PC-3 (cell line): ENCODE measurements at regions of chr6 and their contacts with region 1.

Region 1: DNA sequence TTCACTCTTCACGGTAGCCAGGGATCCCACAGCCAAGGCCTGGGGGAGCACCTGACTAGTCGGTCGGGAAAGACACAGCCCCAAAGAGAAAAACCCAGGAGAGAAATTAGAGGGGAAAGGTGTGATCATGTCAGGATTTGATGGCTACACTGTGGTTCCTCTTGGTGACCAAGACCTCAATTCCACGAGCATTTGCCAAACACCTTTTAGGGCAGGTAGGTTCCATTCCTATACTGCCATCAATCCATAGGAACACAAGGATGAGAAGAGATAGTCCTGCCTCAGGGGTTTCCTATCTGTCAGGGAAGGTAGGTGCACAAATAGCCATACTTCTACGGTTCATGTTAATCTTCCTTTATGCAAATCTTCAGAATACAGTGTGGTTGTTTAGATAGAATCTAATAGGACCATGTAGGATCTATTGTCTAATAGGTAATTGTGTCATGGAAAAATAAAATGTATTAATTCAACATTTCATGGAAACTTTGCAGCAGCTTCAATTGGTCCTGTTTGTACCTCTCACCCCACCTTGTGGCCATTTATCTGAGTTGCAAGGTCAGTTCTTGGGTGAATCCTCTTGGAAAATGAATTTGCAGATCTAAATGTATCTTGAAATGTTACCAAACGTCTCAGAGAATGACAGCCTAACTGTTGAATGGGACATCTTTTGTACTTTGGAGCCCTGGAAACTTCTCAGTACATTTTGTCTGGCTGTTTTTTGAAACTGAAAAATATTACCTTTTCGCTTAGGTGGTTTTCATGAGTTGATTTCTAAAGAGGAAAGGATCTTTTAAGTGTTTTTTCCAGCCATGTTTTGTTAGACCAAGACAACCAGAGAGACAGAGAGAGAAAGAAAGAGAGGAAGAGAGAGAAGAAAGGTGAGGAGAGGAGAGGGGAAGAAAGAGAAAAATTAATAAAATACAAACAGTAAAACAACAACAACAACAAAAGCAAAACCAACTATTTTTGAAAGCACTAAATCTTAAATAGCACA is 33.7 kb upstream of the IYD start:
- DNase-seq: peak; percentile 67
- ATAC-seq: no peak
- H3K4me3 ChIP-seq: no peak overlapping the region
- H3K27ac ChIP-seq: no peak overlapping the region
- H3K4me1 ChIP-seq: peaks cover 8% of the 10 kb centered on the region
- H3K27me3 ChIP-seq: no peaks in the 10 kb centered on the region
- CTCF ChIP-seq: peak; percentile 86

Region 2: GRCh38 chr6:150004783-150005717 is 330.0 kb before region 1 on chr6:
- CTCF ChIA-PET with region 1: no interaction called
- POLR2A ChIA-PET with region 1: no interaction called
- intact Hi-C with region 1: loop called (anchors 2 kb)
- DNase-seq: peak; percentile 87
- ATAC-seq: peak; percentile 95
- H3K4me3 ChIP-seq: peak overlapping the region; percentile 86
- H3K27ac ChIP-seq: no peak overlapping the region
- H3K4me1 ChIP-seq: peaks cover 9% of the 10 kb centered on the region
- H3K27me3 ChIP-seq: no peaks in the 10 kb centered on the region
- CTCF ChIP-seq: no peak

Region 3: GRCh38 chr6:150079604-150080003 is 255.5 kb before region 1 on chr6:
- CTCF ChIA-PET with region 1: interaction called, 6 read pairs
- POLR2A ChIA-PET with region 1: no interaction called
- intact Hi-C with region 1: loop called (anchors 2 kb)
- DNase-seq: peak; percentile 10
- ATAC-seq: no peak
- H3K4me3 ChIP-seq: no peak overlapping the region
- H3K27ac ChIP-seq: no peak overlapping the region
- H3K4me1 ChIP-seq: peaks cover 18% of the 10 kb centered on the region
- H3K27me3 ChIP-seq: no peaks in the 10 kb centered on the region
- CTCF ChIP-seq: no peak

Region 4: GRCh38 chr6:150229775-150230561 is 105.1 kb before region 1 on chr6:
- CTCF ChIA-PET with region 1: no interaction called
- POLR2A ChIA-PET with region 1: no interaction called
- intact Hi-C with region 1: no loop called
- DNase-seq: peak; percentile 27
- ATAC-seq: no peak
- H3K4me3 ChIP-seq: no peak overlapping the region
- H3K27ac ChIP-seq: no peak overlapping the region
- H3K4me1 ChIP-seq: 0 out of 2 replicates have a peak, but pooled peaks cover 4% of the 10 kb centered on the region
- H3K27me3 ChIP-seq: no peaks in the 10 kb centered on the region
- CTCF ChIP-seq: no peak

Region 5: DNA sequence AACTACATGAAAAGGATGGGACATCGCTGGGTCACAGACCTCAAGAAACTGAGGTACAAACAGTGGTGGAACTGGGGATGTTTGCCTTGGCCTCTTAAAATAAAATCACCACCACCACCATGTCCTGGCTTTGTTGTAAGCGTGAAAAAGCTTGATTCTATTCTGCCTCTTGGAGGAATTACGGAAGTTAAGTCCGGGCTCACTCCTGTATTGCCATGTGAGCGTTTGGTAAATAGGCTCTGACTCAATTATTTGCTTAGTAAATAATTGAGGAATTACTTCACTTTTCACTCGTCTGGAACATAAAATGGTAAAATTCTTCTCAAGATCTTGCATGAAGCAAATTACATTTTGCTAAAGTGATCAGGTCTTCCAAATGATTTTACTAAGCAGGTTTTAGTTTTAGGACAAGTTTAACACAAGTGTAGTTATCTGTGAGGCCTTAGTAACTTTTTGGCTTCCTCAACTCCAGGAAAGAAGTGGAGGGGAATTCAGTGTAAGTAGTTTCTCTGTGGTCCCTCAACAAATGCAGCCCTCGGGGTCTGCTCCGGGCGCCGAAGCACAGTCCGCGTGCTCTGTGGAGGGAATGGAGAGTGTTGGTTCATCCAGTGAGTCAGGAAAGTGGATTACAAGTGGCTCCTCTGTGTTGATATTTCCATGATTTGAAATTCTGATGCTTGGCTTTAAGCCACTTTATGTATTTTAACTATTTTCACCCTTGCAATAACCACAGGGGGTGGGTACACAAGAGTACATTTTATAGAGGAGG is 57.5 kb after region 1 on chr6:
- CTCF ChIA-PET with region 1: no interaction called
- POLR2A ChIA-PET with region 1: no interaction called
- intact Hi-C with region 1: loop called (anchors 5 kb)
- DNase-seq: peak; percentile 59
- ATAC-seq: peak; percentile 55
- H3K4me3 ChIP-seq: no peak overlapping the region
- H3K27ac ChIP-seq: peak overlapping the region; percentile 58
- H3K4me1 ChIP-seq: peaks cover 14% of the 10 kb centered on the region
- H3K27me3 ChIP-seq: no peaks in the 10 kb centered on the region
- CTCF ChIP-seq: no peak

Region 6: DNA sequence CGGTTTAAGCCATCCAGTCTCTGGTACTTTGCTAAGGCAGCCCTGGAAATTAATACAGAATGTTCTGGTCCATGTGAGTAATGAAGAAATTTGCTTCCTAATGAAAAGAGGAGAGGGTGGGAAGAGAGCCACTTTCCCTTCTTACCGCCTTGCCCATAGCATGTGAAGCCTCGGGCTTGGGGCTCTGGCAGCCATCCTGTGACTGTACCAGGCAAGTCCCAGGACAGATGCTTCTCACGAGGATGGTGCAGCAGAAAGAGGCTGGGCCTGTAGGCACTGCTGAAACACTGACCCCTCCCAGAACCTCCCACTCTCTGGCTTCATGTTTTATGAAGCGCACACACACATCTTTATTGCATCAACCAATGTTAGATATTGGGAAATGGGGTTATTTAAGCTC is 108.5 kb after region 1 on chr6:
- CTCF ChIA-PET with region 1: no interaction called
- POLR2A ChIA-PET with region 1: no interaction called
- intact Hi-C with region 1: no loop called
- DNase-seq: no peak
- ATAC-seq: no peak
- H3K4me3 ChIP-seq: no peak overlapping the region
- H3K27ac ChIP-seq: no peak overlapping the region
- H3K4me1 ChIP-seq: no peaks in the 10 kb centered on the region
- H3K27me3 ChIP-seq: no peaks in the 10 kb centered on the region
- CTCF ChIP-seq: no peak